GM23248 (cell line): ENCODE measurements at regions of chr12 and their contacts with region 1.

Region 1: GRCh38 chr12:66417217-66417616 is 114.9 kb downstream of the HELB start:
- DNase-seq: no peak
- H3K4me3 ChIP-seq: no peak overlapping the region
- H3K27ac ChIP-seq: no peak overlapping the region
- H3K4me1 ChIP-seq: no peaks in the 10 kb centered on the region
- H3K27me3 ChIP-seq: peaks cover 3% of the 10 kb centered on the region; the same call in 1 of the 2 replicates

Region 2: DNA sequence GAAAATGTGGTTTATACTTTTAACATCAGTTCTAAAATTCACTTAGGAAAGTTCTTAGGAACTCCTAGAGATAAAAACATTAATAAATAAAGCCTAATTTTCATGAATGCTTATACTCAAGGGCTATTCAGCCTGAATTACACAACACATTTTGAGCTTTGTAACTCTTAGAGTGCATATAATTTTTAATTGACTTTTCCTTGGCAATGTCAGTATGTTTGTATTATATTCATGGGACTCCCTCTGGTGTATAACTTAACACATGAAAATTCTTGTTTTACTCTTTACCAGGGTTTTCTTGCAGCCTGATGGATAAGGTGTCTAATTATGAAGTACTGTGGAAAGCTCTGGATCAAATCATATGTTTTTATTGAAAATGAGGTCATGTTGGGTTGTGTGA is 743.5 kb before region 1 on chr12:
- in situ Hi-C with region 1: no loop called
- DNase-seq: peak; percentile 48
- H3K4me3 ChIP-seq: no peak overlapping the region
- H3K27ac ChIP-seq: no peak overlapping the region
- H3K4me1 ChIP-seq: peaks cover 34% of the 10 kb centered on the region
- H3K27me3 ChIP-seq: no peaks in the 10 kb centered on the region

Region 3: GRCh38 chr12:66269757-66270383 is 147.3 kb before region 1 on chr12:
- in situ Hi-C with region 1: loop called (anchors 10 kb)
- DNase-seq: peak; percentile 79
- H3K4me3 ChIP-seq: no peak overlapping the region
- H3K27ac ChIP-seq: no peak overlapping the region
- H3K4me1 ChIP-seq: no peaks in the 10 kb centered on the region
- H3K27me3 ChIP-seq: no peaks in the 10 kb centered on the region